ENCODE measurements at regions of chr15 and their contacts with region 1.

Region 1: GRCh38 chr15:31215490-31216214 is 111.0 kb upstream of the KLF13 start:
- DNase-seq: peak; percentile 99
- H3K4me3 ChIP-seq: peak overlapping the region; percentile 34 to 82 (median 65)
- H3K27ac ChIP-seq: peak overlapping the region; percentile 85 to 100 (median 98)
- H3K4me1 ChIP-seq: peaks cover 0 to 84% (median 43%) of the 10 kb centered on the region in 6 donors
- H3K27me3 ChIP-seq: no peaks in the 10 kb centered on the region
- CTCF ChIP-seq: peak; percentile 93 to 98 (median 96)
- POLR2A ChIP-seq: peak in 1 of 3 donors; percentile 18

Region 2: DNA sequence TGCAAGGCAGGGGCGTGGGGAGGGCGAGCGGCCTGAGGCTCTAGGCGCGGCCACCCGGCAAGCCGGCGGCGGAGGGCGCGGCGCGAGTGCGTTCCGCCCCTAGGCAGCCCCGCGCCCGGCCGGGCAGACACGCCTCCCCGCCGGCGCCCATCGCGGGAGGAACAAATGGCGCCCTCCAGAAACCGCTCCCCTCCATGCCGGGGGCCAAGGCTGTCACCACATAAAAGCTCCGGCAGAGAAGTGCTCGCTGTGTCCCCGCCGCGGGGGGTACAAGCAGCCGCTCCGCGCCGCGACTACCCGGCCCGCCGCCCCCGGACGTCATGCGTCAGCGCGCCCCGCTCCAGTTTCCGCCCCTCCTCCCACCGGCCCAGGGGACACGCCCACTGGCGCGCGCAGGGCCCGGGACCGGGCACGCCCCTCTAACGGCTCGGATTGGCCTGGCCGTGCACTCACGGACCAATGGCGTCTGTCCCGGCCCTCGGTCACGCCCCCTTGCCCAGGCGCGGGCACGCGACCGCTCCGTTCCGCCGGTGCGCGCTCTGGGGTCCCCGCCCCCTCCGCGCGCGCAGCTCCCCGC is 110.6 kb after region 1 on chr15:
- intact Hi-C with region 1: loop called (anchors 10 kb)
- DNase-seq: peak; percentile 100
- H3K4me3 ChIP-seq: peak overlapping the region; percentile 43 to 91 (median 78)
- H3K27ac ChIP-seq: peak overlapping the region; percentile 86 to 100 (median 99)
- H3K4me1 ChIP-seq: peaks cover 9 to 56% (median 48%) of the 10 kb centered on the region in 6 donors
- H3K27me3 ChIP-seq: no peaks in the 10 kb centered on the region
- CTCF ChIP-seq: peak in 3 of 11 experiments; percentile 8 to 53 (median 42)
- POLR2A ChIP-seq: peak; percentile 90 to 95 (median 94)